Sigmoid colon (tissue), 7 donors: ENCODE measurements at regions of chr13 and their contacts with region 1.

Region 1: DNA sequence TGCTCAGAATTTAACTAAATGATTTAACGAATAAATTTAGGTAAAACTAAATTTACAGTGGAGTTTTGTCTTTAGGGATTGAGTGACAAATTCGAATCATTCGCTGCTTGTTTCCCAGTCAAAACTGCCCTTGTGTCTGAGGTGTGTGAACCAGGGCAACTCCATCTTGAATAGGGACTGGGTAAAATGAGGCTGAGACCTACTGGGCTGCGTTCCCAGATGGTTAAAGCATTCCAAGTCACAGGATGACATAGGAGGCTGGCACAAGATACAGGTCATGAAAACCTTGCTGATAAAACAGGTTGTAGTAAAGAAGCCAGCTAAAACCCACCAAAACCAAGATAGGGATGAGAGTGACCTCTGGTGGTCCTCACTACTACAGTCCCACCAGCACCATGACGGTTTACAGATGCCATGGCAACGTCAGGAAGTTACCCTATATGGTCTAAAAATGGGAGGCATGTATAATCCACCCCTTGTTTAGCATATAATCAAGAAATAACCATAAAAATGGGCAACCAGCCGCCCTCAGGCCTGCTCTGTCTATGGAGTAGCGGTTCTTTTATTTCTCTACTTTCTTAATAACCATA is 10.2 kb upstream of the ANKRD10 start:
- DNase-seq: no peak
- H3K4me3 ChIP-seq: no peak overlapping the region
- H3K27ac ChIP-seq: peak overlapping the region in 3 of 4 donors; percentile 4 to 61 (median 7)
- H3K4me1 ChIP-seq: peaks cover 0 to 16% (median 15%) of the 10 kb centered on the region in 4 donors
- H3K27me3 ChIP-seq: no peaks in the 10 kb centered on the region
- CTCF ChIP-seq: no peak
- EP300 ChIP-seq: no peak
- POLR2A ChIP-seq: no peak

Region 2: GRCh38 chr13:109361562-109362289 is 1563.4 kb before region 1 on chr13:
- intact Hi-C with region 1: no loop called
- DNase-seq: no peak
- H3K4me3 ChIP-seq: no peak overlapping the region
- H3K27ac ChIP-seq: no peak overlapping the region
- H3K4me1 ChIP-seq: no peaks in the 10 kb centered on the region
- H3K27me3 ChIP-seq: no peaks in the 10 kb centered on the region
- CTCF ChIP-seq: no peak
- EP300 ChIP-seq: no peak
- POLR2A ChIP-seq: no peak

Region 3: DNA sequence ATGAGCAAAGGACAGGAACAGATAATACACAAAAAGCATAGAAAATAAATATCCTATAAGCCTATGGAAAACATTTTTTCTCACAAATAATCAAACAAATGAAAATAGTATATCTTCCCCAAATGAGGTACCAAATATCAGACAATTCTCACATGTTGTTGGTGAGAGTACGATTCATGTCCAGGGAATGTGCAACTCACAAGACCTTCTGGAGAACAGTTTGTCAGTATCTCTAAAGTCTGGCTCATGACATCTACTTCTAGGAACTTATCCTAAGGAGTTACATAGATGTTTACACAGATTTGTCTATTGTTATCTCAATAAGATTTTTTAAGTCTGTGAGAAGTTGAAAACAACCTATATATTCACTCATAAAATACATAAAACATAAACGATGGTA is 109.7 kb after region 1 on chr13:
- intact Hi-C with region 1: loop called (anchors 5 kb)
- DNase-seq: no peak
- H3K4me3 ChIP-seq: no peak overlapping the region
- H3K27ac ChIP-seq: no peak overlapping the region
- H3K4me1 ChIP-seq: no peaks in the 10 kb centered on the region
- H3K27me3 ChIP-seq: peaks cover 0 to 5% (median 0%) of the 10 kb centered on the region in 3 donors
- CTCF ChIP-seq: no peak
- EP300 ChIP-seq: no peak
- POLR2A ChIP-seq: no peak

Region 4: DNA sequence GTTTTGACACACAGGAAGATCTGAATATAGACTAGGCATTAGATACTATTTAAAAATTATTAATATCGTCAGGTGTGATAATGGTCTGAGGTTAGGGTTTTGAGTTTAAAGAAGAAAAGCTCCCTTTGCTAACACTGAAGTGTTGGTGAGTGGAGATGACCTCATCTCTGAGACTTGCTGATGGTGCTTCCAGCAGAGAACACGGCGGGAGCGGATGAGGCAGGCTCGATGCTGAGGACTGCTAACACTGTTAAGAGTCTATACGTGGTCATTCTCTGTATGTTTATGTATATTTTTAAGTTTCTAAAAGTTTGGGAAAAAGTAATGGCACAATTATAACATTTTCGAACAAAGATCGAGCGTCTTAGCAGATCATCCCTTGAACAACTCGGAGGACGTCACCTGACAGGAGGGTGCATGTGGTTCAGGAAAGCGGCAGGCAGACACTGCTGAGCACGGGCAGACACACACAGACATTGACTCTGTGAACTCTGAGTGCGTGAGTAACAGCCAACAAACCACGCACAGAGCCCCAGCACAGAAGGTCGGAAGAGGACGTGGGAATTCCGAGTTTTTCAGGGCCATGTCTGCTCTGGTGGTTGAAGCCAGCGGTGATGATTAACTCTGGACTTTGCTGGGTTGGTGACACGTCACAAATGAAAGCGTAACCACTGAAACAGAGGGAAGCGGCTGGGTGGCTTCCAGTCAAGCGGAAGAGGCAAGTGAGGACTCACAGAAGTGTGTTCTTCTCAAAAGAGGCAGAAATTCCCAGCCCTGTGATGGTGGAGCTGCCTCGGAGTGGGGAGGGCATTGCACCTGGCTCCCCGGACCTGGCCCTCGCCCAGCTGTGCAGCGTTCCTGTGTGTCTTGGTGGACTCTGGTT is 303.4 kb after region 1 on chr13:
- intact Hi-C with region 1: no loop called
- DNase-seq: no peak
- H3K4me3 ChIP-seq: no peak overlapping the region
- H3K27ac ChIP-seq: no peak overlapping the region
- H3K4me1 ChIP-seq: peaks cover 0 to 15% (median 6%) of the 10 kb centered on the region in 4 donors
- H3K27me3 ChIP-seq: no peaks in the 10 kb centered on the region
- CTCF ChIP-seq: no peak
- EP300 ChIP-seq: no peak
- POLR2A ChIP-seq: no peak